ENCODE measurements at regions of chr4 and their contacts with region 1.

Region 1: GRCh38 chr4:74189331-74190043 is 31.6 kb downstream of the MTHFD2L start:
- DNase-seq: peak in 4 of 5 donors; percentile 17 to 34 (median 26)
- H3K4me3 ChIP-seq: no peak overlapping the region
- H3K4me3 Mint-ChIP-seq: no peak overlapping the region
- H3K27ac ChIP-seq: no peak overlapping the region
- H3K27ac Mint-ChIP-seq: no peak overlapping the region
- H3K4me1 ChIP-seq: no peaks in the 10 kb centered on the region
- H3K4me1 Mint-ChIP-seq: no peaks in the 10 kb centered on the region
- H3K27me3 ChIP-seq: no peaks in the 10 kb centered on the region
- H3K27me3 Mint-ChIP-seq: no peaks in the 10 kb centered on the region

Region 2: DNA sequence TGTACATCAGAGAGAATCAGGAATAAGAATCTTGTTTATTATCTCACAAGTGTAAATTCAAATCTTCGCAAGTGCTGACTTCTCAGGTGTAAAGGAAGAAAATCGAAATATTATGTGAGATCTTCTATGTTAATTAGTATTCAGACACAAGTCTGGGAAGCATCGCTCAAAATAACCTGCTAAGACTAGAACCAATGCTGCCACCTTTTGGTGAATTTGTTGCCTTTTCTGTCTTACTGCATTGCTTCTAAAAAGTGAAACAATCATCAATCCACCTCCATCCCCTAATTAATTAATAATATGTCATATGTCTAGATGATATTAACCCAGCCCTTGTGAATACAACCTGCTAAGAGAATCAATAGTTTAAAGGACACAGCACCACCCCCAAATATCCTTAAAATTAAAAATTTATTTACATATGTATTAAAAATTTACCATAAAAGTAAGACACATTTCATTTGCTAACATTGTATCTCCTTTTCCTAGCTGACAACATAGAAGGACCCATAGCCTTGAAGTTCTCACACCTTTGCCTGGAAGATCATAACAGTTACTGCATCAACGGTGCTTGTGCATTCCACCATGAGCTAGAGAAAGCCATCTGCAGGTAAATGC is 122.3 kb after region 1 on chr4:
- CTCF ChIA-PET with region 1: no interaction called
- POLR2A ChIA-PET with region 1: no interaction called
- intact Hi-C with region 1: loop called (anchors 1 kb)
- DNase-seq: peak in 4 of 5 donors; percentile 27 to 36 (median 34)
- H3K4me3 ChIP-seq: no peak overlapping the region
- H3K4me3 Mint-ChIP-seq: no peak overlapping the region
- H3K27ac ChIP-seq: no peak overlapping the region
- H3K27ac Mint-ChIP-seq: peak overlapping the region in 1 of 7 donors; percentile 19
- H3K4me1 ChIP-seq: peaks cover 6% of the 10 kb centered on the region
- H3K4me1 Mint-ChIP-seq: peaks cover 6 to 11% (median 8%) of the 10 kb centered on the region in 4 donors
- H3K27me3 ChIP-seq: no peaks in the 10 kb centered on the region
- H3K27me3 Mint-ChIP-seq: peaks cover 2 to 3% of the 10 kb centered on the region in 2 donors